ENCODE measurements at regions of chr9 and their contacts with region 1.

Region 1: GRCh38 chr9:101977614-101978210 is 239.3 kb upstream of the GRIN3A start:
- DNase-seq: peak in 1 of 2 experiments; percentile 12
- H3K4me3 ChIP-seq: no peak overlapping the region
- H3K4me3 Mint-ChIP-seq: no peak overlapping the region
- H3K27ac Mint-ChIP-seq: no peak overlapping the region
- H3K4me1 ChIP-seq: no peaks in the 10 kb centered on the region
- H3K4me1 Mint-ChIP-seq: no peaks in the 10 kb centered on the region
- H3K27me3 ChIP-seq: no peaks in the 10 kb centered on the region
- H3K27me3 Mint-ChIP-seq: peaks cover 3% of the 10 kb centered on the region
- CTCF ChIP-seq: peak; percentile 43 to 56

Region 2: GRCh38 chr9:101738566-101739183 is 239.0 kb before region 1 on chr9 and contains the start of gene GRIN3A:
- CTCF ChIA-PET with region 1: no interaction called
- POLR2A ChIA-PET with region 1: no interaction called
- intact Hi-C with region 1: loop called (anchors 10 kb)
- DNase-seq: peak in 1 of 2 experiments; percentile 12
- H3K4me3 ChIP-seq: no peak within 1 kb of the TSS
- H3K4me3 Mint-ChIP-seq: peak within 1 kb of the TSS; percentile 69
- H3K27ac Mint-ChIP-seq: no peak within 1 kb of the TSS
- H3K4me1 ChIP-seq: no peaks in the 10 kb centered on the region
- H3K4me1 Mint-ChIP-seq: peaks cover 6% of the 10 kb centered on the region
- H3K27me3 ChIP-seq: no peaks in the 10 kb centered on the region
- H3K27me3 Mint-ChIP-seq: peaks cover 32% of the 10 kb centered on the region
- CTCF ChIP-seq: peak in 1 of 2 experiments; percentile 7
- total RNA-seq, gene GRIN3A: not detected in 2 replicates

Region 3: GRCh38 chr9:101957705-101958104 is 20.0 kb before region 1 on chr9:
- CTCF ChIA-PET with region 1: no interaction called
- POLR2A ChIA-PET with region 1: no interaction called
- intact Hi-C with region 1: no loop called
- DNase-seq: no peak
- H3K4me3 ChIP-seq: no peak overlapping the region
- H3K4me3 Mint-ChIP-seq: no peak overlapping the region
- H3K27ac Mint-ChIP-seq: no peak overlapping the region
- H3K4me1 ChIP-seq: no peaks in the 10 kb centered on the region
- H3K4me1 Mint-ChIP-seq: no peaks in the 10 kb centered on the region
- H3K27me3 ChIP-seq: no peaks in the 10 kb centered on the region
- H3K27me3 Mint-ChIP-seq: peaks cover 2% of the 10 kb centered on the region
- CTCF ChIP-seq: no peak

Region 4: GRCh38 chr9:102035929-102036328 is 58.2 kb after region 1 on chr9:
- CTCF ChIA-PET with region 1: no interaction called
- POLR2A ChIA-PET with region 1: no interaction called
- intact Hi-C with region 1: no loop called
- DNase-seq: no peak
- H3K4me3 ChIP-seq: no peak overlapping the region
- H3K4me3 Mint-ChIP-seq: no peak overlapping the region
- H3K27ac Mint-ChIP-seq: no peak overlapping the region
- H3K4me1 ChIP-seq: no peaks in the 10 kb centered on the region
- H3K4me1 Mint-ChIP-seq: no peaks in the 10 kb centered on the region
- H3K27me3 ChIP-seq: no peaks in the 10 kb centered on the region
- H3K27me3 Mint-ChIP-seq: no peaks in the 10 kb centered on the region
- CTCF ChIP-seq: no peak

Region 5: GRCh38 chr9:102569436-102569835 is 591.7 kb after region 1 on chr9:
- CTCF ChIA-PET with region 1: no interaction called
- POLR2A ChIA-PET with region 1: no interaction called
- intact Hi-C with region 1: loop called (anchors 10 kb)
- DNase-seq: no peak
- H3K4me3 ChIP-seq: no peak overlapping the region
- H3K4me3 Mint-ChIP-seq: no peak overlapping the region
- H3K27ac Mint-ChIP-seq: no peak overlapping the region
- H3K4me1 ChIP-seq: no peaks in the 10 kb centered on the region
- H3K4me1 Mint-ChIP-seq: no peaks in the 10 kb centered on the region
- H3K27me3 ChIP-seq: no peaks in the 10 kb centered on the region
- H3K27me3 Mint-ChIP-seq: no peaks in the 10 kb centered on the region
- CTCF ChIP-seq: no peak

Region 6: DNA sequence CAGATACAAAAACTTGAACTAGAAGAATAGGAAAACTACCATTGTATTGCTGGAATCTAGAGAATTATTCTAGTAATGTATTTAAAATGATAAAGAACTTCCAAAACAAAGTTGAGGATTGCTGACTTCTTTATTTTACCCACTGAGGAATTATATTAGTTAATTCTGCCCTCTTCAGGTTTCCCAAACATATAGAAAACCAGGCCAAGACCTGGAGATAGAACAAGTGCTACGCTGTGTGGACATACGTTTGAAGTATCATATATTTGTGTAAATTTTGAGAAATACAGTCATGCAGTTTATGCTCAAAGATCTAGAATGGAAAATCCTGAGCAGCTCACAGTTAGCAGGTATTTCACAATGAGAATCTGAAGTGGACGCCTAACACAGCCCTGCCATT is 855.1 kb after region 1 on chr9:
- CTCF ChIA-PET with region 1: no interaction called
- POLR2A ChIA-PET with region 1: no interaction called
- intact Hi-C with region 1: loop called (anchors 10 kb)
- DNase-seq: no peak
- H3K4me3 ChIP-seq: no peak overlapping the region
- H3K4me3 Mint-ChIP-seq: no peak overlapping the region
- H3K27ac Mint-ChIP-seq: no peak overlapping the region
- H3K4me1 ChIP-seq: 0 out of 2 replicates have a peak, but pooled peaks cover 4% of the 10 kb centered on the region
- H3K4me1 Mint-ChIP-seq: peaks cover 9% of the 10 kb centered on the region
- H3K27me3 ChIP-seq: no peaks in the 10 kb centered on the region
- H3K27me3 Mint-ChIP-seq: no peaks in the 10 kb centered on the region
- CTCF ChIP-seq: no peak